AG04450 (cell line): ENCODE measurements at regions of chr6 and their contacts with region 1.

Region 1: DNA sequence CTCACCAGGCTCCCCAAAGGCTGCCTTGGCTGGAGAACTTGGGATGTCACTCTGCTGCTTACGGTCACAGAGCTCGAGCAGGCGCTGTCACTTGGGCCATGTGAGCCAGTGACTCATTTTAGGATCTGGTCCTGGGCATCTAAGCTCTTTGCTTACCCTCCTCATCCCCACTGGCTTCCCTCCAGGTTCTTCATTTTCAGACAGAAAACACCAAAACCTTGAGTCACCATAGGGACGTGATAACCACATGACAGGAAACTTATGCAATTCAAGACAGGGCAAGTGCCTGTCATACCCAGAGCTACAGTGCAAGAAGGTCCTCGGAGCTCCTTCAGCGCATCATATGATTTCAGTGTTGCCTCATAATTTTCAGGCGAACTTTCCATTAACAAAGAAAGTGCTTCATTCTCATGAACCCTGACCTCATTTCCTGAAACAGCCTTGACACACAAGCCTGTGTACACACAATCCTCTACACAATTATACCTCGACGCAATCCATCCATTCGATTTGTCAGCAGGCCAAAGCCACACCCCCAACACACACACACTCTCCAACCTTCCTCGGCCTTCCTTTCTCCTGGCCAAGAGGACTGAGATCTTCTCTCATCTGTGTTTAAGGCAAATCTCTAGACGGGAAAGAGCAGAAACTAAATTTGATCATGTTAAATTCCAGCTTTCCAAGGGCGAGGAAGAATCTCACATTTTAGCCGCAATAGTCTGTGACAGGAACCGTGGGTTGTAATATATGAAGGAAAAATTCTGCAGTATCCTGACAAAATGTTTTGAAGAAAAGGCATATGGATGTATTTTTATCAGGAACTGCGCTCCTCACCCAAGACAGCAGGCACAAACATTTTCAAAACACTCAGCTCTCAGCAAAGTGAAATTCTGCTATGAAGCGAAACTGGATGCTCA is 25.3 kb downstream of the TBC1D7 start:
- DNase-seq: peak; percentile 85
- H3K4me3 ChIP-seq: peak overlapping the region; percentile 45
- H3K27ac ChIP-seq: peak overlapping the region; percentile 94
- H3K27me3 ChIP-seq: no peaks in the 10 kb centered on the region
- CTCF ChIP-seq: no peak

Region 2: GRCh38 chr6:13194852-13195251 is 108.2 kb before region 1 on chr6:
- CTCF ChIA-PET with region 1: interaction called, 25 read pairs
- POLR2A ChIA-PET with region 1: no interaction called
- DNase-seq: peak; percentile 37
- H3K4me3 ChIP-seq: no peak overlapping the region
- H3K27ac ChIP-seq: no peak overlapping the region
- H3K27me3 ChIP-seq: peaks cover 3% of the 10 kb centered on the region
- CTCF ChIP-seq: peak; percentile 75